ENCODE measurements at regions of chr5 and their contacts with region 1.

Region 1: DNA sequence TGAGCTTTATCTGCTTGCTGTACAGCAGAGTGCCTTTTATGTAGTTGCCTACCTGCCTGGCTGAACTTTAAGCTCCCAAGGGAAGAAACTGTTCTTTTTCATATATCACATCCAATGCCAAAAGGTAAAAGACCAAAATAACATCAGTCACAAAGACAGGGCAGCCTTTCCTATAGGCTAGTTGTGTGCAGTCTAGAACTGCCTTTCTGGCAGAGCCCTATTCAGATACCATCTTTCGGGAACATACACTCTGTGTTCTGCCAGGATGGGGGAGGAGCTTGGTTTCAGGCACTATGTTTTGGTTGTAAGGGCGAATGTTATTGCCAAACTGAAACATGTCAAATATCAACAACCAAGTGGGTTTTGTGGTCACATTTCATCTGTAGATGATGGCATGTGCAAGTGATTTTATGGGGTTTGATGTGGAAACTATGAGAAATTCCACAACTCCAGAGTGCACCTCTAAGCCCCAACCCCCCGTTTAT is 314.5 kb downstream of the ADGRV1 start:
- DNase-seq: peak; percentile 50
- ATAC-seq: peak; percentile 86
- H3K4me3 Mint-ChIP-seq: no peak overlapping the region
- H3K27ac Mint-ChIP-seq: no peak overlapping the region
- H3K4me1 Mint-ChIP-seq: peaks cover 30% of the 10 kb centered on the region
- H3K27me3 Mint-ChIP-seq: peaks cover 38% of the 10 kb centered on the region

Region 2: DNA sequence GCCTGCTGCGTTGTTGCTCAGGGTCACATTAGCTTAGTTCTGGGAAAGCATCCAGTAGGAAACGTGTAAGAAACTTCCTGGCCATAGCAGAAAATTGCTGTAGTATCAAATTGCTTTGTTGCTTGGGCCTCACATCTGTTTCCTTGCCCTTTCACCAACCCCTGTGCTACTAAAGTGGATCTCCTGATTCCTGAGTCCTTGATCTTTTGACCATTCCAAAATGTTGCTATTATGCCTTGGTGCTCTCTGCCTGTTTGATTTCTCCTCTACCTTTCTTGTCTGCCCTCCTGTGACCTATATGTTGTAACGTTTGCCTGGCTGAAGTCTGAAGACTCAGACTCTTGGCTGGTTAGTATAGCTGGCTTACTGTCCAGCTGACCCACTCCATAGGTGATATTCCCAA is 36.0 kb after region 1 on chr5:
- CTCF ChIA-PET with region 1: no interaction called
- POLR2A ChIA-PET with region 1: no interaction called
- intact Hi-C with region 1: no loop called
- DNase-seq: no peak
- ATAC-seq: no peak
- H3K4me3 Mint-ChIP-seq: no peak overlapping the region
- H3K27ac Mint-ChIP-seq: no peak overlapping the region
- H3K4me1 Mint-ChIP-seq: no peaks in the 10 kb centered on the region
- H3K27me3 Mint-ChIP-seq: peaks cover 17% of the 10 kb centered on the region

Region 3: DNA sequence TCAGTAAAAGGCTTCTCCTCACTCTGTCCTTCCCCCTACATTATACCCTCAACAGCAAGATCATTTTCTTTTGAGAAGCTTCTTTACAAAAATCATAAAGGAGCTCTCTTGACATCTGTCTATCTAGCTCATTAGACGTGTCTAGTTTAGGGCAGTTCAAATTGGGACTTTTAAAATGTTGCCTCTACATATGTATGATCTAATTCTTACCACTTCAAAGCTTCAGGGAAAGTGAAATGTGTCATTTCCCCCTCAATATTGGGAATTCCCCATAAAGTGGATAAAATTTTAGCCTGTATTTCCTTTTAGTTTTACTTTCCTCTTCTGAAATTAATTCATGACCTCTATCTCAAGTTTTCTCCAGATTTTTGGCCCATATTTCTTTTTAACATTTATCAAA is 186.3 kb after region 1 on chr5:
- CTCF ChIA-PET with region 1: no interaction called
- POLR2A ChIA-PET with region 1: no interaction called
- intact Hi-C with region 1: loop called in 1 of 2 experiments (anchors 5 kb)
- DNase-seq: no peak
- ATAC-seq: peak; percentile 90
- H3K4me3 Mint-ChIP-seq: no peak overlapping the region
- H3K27ac Mint-ChIP-seq: no peak overlapping the region
- H3K4me1 Mint-ChIP-seq: peaks cover 25% of the 10 kb centered on the region
- H3K27me3 Mint-ChIP-seq: peaks cover 39% of the 10 kb centered on the region